ENCODE measurements at regions of chr19 and their contacts with region 1.

Region 1: DNA sequence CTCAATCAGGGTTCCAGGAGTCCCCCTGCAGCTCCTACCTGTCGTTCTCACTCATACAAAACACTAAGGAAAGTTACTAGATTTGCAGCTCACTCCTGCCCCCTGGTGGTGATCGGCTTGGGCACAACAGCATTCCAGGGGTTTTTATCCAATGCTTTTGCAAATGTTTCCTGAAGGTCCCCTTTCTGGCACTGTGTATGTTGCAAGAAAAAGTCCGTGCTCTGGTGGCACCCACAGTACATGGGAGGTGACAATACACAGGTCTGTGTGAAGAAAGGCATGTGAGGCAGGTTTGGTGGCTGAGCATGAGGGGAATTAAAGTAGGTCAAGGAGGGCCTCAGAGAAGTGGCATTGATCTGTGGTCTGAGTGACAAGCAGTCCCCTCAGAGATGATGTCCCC is 8.6 kb upstream of the TYK2 start:
- DNase-seq: peak; percentile 62 to 82 (median 74)
- ATAC-seq: peak; percentile 77
- H3K4me3 ChIP-seq: no peak overlapping the region
- H3K4me3 Mint-ChIP-seq: no peak overlapping the region
- H3K27ac ChIP-seq: no peak overlapping the region
- H3K27ac Mint-ChIP-seq: peak overlapping the region in 7 of 9 donors; percentile 7 to 56 (median 24)
- H3K4me1 ChIP-seq: no peaks in the 10 kb centered on the region
- H3K4me1 Mint-ChIP-seq: peaks cover 0 to 8% (median 4%) of the 10 kb centered on the region in 7 donors
- H3K27me3 ChIP-seq: no peaks in the 10 kb centered on the region
- H3K27me3 Mint-ChIP-seq: no peaks in the 10 kb centered on the region

Region 2: GRCh38 chr19:10259162-10259905 is 129.6 kb before region 1 on chr19:
- CTCF ChIA-PET with region 1: interaction called, 40 read pairs
- POLR2A ChIA-PET with region 1: interaction called, 5 read pairs
- intact Hi-C with region 1: loop called (anchors 1 kb)
- DNase-seq: peak; percentile 61 to 88 (median 82)
- ATAC-seq: peak; percentile 95
- H3K4me3 ChIP-seq: no peak overlapping the region
- H3K4me3 Mint-ChIP-seq: peak overlapping the region in 1 of 10 donors; percentile 49
- H3K27ac ChIP-seq: no peak overlapping the region
- H3K27ac Mint-ChIP-seq: peak overlapping the region in 1 of 9 donors; percentile 87
- H3K4me1 ChIP-seq: no peaks in the 10 kb centered on the region
- H3K4me1 Mint-ChIP-seq: peaks cover 0 to 29% (median 4%) of the 10 kb centered on the region in 7 donors
- H3K27me3 ChIP-seq: no peaks in the 10 kb centered on the region
- H3K27me3 Mint-ChIP-seq: no peaks in the 10 kb centered on the region

Region 3: DNA sequence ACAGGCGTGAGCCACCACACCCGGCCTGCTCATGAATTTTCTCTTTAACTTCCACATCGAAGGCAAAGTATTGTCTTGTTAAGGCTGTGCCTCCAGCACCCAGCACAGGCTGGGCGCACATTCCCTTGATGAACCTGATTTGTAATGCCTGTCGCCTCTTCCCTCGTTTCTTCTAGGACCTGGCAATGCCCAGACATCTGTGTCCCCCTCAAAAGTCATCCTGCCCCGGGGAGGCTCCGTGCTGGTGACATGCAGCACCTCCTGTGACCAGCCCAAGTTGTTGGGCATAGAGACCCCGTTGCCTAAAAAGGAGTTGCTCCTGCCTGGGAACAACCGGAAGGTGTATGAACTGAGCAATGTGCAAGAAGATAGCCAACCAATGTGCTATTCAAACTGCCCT is 114.4 kb before region 1 on chr19:
- CTCF ChIA-PET with region 1: interaction called, 146 read pairs
- POLR2A ChIA-PET with region 1: interaction called, 31 read pairs
- intact Hi-C with region 1: loop called (anchors 1 kb)
- DNase-seq: no peak
- ATAC-seq: no peak
- H3K4me3 ChIP-seq: no peak overlapping the region
- H3K4me3 Mint-ChIP-seq: peak overlapping the region in 1 of 10 donors; percentile 45
- H3K27ac ChIP-seq: no peak overlapping the region
- H3K27ac Mint-ChIP-seq: peak overlapping the region in 4 of 9 donors; percentile 38 to 50 (median 44)
- H3K4me1 ChIP-seq: peaks cover 6 to 13% of the 10 kb centered on the region in 2 donors
- H3K4me1 Mint-ChIP-seq: peaks cover 8 to 50% (median 28%) of the 10 kb centered on the region in 7 donors
- H3K27me3 ChIP-seq: no peaks in the 10 kb centered on the region
- H3K27me3 Mint-ChIP-seq: no peaks in the 10 kb centered on the region

Region 4: DNA sequence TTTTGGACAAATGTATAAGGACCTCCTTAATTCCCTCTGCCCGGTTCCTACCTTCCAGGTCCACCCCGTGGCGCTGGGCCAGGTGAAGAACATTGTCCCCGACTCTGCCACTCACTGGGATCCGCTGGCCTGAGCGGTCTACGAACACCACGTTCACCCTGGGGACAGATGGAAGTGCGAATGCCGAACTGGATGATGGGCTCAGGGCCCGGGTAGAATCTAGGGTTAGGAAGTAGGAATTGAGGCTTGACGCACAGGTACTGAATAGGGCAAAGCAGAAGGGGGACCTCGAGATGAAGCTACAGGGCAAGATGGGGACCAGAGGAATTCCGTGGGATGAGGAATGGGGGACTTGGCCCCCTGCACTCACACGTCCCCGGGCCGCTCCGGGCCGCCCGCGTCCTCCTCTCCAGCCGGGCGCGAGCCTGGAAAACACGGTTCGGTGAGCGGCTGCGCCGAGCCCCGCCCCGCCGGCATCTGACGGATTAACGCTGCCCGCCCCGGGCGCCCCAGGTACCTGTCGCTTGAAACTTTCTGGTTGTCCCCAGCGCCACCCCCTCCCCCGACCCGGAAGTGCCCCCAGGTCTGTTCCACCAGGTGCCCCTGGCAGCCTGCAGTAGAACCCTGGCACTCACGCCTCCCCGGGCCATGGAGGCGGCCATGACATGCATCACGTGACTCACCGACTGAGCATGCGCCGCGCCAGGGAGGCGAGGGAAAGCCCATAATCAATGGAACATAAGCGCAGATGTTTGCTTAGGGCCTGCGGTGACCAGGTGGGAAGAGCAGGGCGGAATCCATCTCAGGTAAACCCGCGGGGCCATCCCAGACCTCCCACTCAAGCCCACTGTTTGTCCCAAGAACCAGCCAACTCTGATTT is 73.4 kb before region 1 on chr19 and contains the start of gene FDX2:
- CTCF ChIA-PET with region 1: no interaction called
- POLR2A ChIA-PET with region 1: no interaction called
- intact Hi-C with region 1: loop called in 1 of 2 experiments (anchors 1 kb)
- DNase-seq: peak; percentile 77 to 94 (median 86)
- ATAC-seq: peak; percentile 92
- H3K4me3 ChIP-seq: peak within 1 kb of the TSS; percentile 86
- H3K4me3 Mint-ChIP-seq: peak within 1 kb of the TSS; percentile 87 to 94 (median 90)
- H3K27ac ChIP-seq: peak within 1 kb of the TSS; percentile 70
- H3K27ac Mint-ChIP-seq: peak within 1 kb of the TSS; percentile 35 to 95 (median 86)
- H3K4me1 ChIP-seq: peaks cover 6 to 13% of the 10 kb centered on the region in 2 donors
- H3K4me1 Mint-ChIP-seq: peaks cover 13 to 23% (median 16%) of the 10 kb centered on the region in 7 donors
- H3K27me3 ChIP-seq: no peaks in the 10 kb centered on the region
- H3K27me3 Mint-ChIP-seq: no peaks in the 10 kb centered on the region
- total RNA-seq, gene FDX2: 5.7 to 10.5 (median 9.3) TPM

Region 5: DNA sequence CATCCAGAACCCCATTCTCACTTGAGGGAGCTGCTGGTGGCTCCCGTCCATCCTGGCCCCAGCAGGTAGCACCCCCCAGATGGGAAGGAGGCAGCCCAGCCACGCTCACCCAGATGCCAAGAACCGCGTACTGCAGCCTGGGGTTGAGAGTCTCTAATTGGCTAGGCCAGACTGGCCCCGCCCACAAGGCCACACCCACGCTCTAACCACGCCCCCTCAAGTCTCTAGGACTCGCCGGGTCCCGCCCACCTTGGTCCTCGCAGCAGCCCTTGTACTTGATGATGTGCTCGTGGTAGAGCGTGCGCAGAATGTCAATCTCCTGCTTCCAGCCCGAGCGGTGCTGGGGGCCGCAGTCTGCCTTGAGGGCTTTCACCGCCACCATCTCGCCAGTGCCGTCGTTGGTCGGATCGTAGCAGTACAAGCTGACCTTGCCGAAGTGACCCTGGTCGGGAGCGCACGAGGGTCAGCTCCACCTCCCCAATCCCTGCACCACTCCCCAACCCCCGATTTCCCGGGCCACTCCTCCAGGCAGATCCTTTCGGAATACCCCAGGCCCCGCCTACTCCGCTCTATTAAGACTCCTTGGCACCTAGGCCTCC is 35.1 kb before region 1 on chr19:
- CTCF ChIA-PET with region 1: no interaction called
- POLR2A ChIA-PET with region 1: no interaction called
- intact Hi-C with region 1: no loop called
- DNase-seq: peak in 6 of 9 donors; percentile 17 to 40 (median 24)
- ATAC-seq: peak; percentile 60
- H3K4me3 ChIP-seq: no peak overlapping the region
- H3K4me3 Mint-ChIP-seq: no peak overlapping the region
- H3K27ac ChIP-seq: no peak overlapping the region
- H3K27ac Mint-ChIP-seq: no peak overlapping the region
- H3K4me1 ChIP-seq: no peaks in the 10 kb centered on the region
- H3K4me1 Mint-ChIP-seq: peaks cover 0 to 3% (median 0%) of the 10 kb centered on the region in 7 donors
- H3K27me3 ChIP-seq: no peaks in the 10 kb centered on the region
- H3K27me3 Mint-ChIP-seq: no peaks in the 10 kb centered on the region

Region 6: DNA sequence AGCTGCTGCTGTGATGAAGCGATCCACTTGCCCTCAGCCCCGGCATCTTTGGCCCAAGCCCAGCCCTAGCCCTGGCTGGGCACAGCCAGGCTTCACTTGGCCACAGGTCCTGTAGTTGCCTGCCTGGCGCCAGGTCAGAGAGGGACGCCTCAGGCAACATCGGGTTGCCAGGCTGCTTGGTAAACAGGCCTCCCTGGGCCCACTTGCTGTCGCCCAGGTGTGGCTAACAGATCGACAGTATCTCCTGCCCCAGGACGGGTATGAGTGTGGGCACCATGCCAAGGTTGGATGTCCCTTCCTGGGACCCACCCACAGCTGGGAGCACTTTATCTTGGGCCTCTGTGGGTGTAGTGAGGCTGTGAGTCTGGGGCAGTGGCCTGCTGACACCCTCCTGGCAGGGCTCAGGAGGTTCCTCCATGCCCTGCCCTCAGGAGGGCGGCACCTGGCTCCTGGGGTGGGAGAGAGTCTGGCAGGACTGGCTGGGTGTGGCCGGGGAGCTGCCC is 510.2 kb after region 1 on chr19:
- CTCF ChIA-PET with region 1: no interaction called
- POLR2A ChIA-PET with region 1: no interaction called
- intact Hi-C with region 1: no loop called
- DNase-seq: no peak
- ATAC-seq: no peak
- H3K4me3 ChIP-seq: no peak overlapping the region
- H3K4me3 Mint-ChIP-seq: no peak overlapping the region
- H3K27ac ChIP-seq: no peak overlapping the region
- H3K27ac Mint-ChIP-seq: no peak overlapping the region
- H3K4me1 ChIP-seq: no peaks in the 10 kb centered on the region
- H3K4me1 Mint-ChIP-seq: peaks cover 6 to 20% (median 18%) of the 10 kb centered on the region in 7 donors
- H3K27me3 ChIP-seq: no peaks in the 10 kb centered on the region
- H3K27me3 Mint-ChIP-seq: no peaks in the 10 kb centered on the region

Measured in naive thymus-derived CD4-positive, alpha-beta T cell (primary cell).